HAP-1 (cell line): ENCODE measurements at regions of chr3 and their contacts with region 1.

Region 1: GRCh38 chr3:141561426-141562034 is 74.7 kb downstream of the RASA2 start:
- DNase-seq: peak; percentile 63
- H3K4me3 ChIP-seq: no peak overlapping the region
- H3K4me1 ChIP-seq: peaks cover 11% of the 10 kb centered on the region
- H3K27me3 ChIP-seq: no peaks in the 10 kb centered on the region

Region 2: GRCh38 chr3:141255846-141256261 is 305.7 kb before region 1 on chr3:
- in situ Hi-C with region 1: no loop called
- DNase-seq: peak in 1 of 2 experiments; percentile 23
- H3K4me3 ChIP-seq: no peak overlapping the region
- H3K4me1 ChIP-seq: peaks cover 6% of the 10 kb centered on the region
- H3K27me3 ChIP-seq: no peaks in the 10 kb centered on the region

Region 3: GRCh38 chr3:141291559-141292355 is 269.8 kb before region 1 on chr3:
- in situ Hi-C with region 1: no loop called
- DNase-seq: no peak
- H3K4me3 ChIP-seq: no peak overlapping the region
- H3K4me1 ChIP-seq: no peaks in the 10 kb centered on the region
- H3K27me3 ChIP-seq: no peaks in the 10 kb centered on the region

Region 4: GRCh38 chr3:141311496-141312353 is 249.8 kb before region 1 on chr3:
- in situ Hi-C with region 1: loop called (anchors 25 kb)
- DNase-seq: peak; percentile 97 to 99
- H3K4me3 ChIP-seq: peak overlapping the region; percentile 66
- H3K4me1 ChIP-seq: peaks cover 9% of the 10 kb centered on the region
- H3K27me3 ChIP-seq: no peaks in the 10 kb centered on the region

Region 5: DNA sequence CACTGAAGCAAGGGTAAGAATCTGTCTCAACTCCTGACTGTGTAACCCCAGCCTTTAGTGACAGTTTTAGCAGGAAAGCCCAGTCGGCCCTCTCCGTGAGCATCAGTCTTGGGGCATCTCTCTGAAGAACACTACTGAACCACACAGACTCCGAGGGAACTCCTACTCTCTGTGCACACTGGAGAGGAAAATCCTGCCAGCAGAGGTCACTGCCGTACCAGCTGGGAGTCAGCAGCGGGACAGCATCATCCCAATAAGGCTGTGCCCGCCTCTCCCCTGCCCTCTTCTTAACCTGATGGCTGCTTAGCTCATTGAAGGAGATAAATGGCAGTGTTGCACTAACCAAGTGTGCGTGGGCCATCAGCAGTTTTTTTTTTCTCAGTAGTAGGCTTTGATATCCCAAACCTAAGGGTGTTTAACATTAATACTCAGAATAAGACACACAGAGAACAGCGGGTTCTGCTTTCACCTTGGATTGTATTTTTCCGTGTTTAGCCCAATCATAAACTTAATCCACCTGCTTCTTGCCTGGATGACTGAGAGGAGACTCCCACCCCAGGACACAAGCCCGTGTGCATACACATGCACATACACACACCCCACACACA is 101.3 kb before region 1 on chr3:
- in situ Hi-C with region 1: loop called (anchors 5 kb)
- DNase-seq: peak; percentile 80 to 93
- H3K4me3 ChIP-seq: no peak overlapping the region
- H3K4me1 ChIP-seq: 0 out of 2 replicates have a peak, but pooled peaks cover 5% of the 10 kb centered on the region
- H3K27me3 ChIP-seq: no peaks in the 10 kb centered on the region

Region 6: GRCh38 chr3:141913150-141913811 is 351.8 kb after region 1 on chr3:
- in situ Hi-C with region 1: no loop called
- DNase-seq: peak; percentile 45
- H3K4me3 ChIP-seq: no peak overlapping the region
- H3K4me1 ChIP-seq: no peaks in the 10 kb centered on the region
- H3K27me3 ChIP-seq: no peaks in the 10 kb centered on the region